ENCODE measurements at regions of chr19 and their contacts with region 1.

Region 1: DNA sequence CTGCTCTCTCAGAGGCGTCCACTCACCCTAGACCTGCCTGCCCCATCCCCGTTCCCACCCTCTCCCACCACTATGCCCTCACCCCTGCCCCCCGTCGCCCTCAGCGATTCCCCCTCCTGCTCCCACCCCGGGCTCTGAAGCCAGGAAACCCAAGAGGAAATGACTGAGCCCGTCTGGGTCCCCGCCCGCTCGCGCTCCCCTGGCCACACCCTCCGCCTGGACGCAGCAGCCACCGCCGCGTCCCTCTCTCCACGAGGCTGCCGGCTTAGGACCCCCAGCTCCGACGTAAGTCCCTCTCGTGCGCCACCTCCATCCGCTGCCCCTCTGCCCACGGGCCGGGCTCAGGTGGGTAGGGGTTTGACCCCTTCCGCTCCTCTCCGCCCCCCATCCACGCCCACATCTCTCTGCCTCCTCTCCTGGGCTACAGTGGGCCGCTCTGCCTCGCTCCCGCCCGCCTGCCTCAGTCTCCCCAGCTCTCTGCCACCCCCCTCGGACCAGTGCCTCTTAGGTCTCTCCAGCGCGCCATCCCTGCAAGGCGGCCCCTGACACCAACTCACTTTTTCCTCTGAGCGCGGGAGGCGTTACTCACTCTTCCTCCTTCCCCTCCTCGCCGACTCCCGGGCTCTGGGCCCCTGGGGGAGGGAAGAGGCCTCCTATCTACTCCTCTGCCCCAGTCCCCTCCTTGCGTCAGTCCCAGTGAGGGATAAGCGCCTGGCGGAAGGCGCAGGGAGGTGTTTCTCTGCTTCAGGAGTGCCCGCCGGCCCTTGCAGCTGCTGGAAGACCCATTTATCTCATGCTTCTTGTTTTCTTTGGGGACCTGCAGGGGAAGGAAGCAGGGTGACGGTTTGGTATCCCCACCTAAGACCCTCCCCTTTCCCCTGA is at the start of gene FXYD5:
- DNase-seq: peak; percentile 60 to 84 (median 64)
- H3K4me3 ChIP-seq: peak within 1 kb of the TSS; percentile 91 to 95
- H3K4me3 Mint-ChIP-seq: peak within 1 kb of the TSS; percentile 98 to 100 (median 99)
- H3K27ac ChIP-seq: peak within 1 kb of the TSS; percentile 91
- H3K27ac Mint-ChIP-seq: peak within 1 kb of the TSS; percentile 98 to 99 (median 99)
- H3K4me1 ChIP-seq: peaks cover 56% of the 10 kb centered on the region
- H3K4me1 Mint-ChIP-seq: peaks cover 35 to 68% (median 46%) of the 10 kb centered on the region in 4 donors
- H3K27me3 ChIP-seq: no peaks in the 10 kb centered on the region
- H3K27me3 Mint-ChIP-seq: no peaks in the 10 kb centered on the region
- total RNA-seq, gene FXYD5: 473 to 484 TPM

Region 2: DNA sequence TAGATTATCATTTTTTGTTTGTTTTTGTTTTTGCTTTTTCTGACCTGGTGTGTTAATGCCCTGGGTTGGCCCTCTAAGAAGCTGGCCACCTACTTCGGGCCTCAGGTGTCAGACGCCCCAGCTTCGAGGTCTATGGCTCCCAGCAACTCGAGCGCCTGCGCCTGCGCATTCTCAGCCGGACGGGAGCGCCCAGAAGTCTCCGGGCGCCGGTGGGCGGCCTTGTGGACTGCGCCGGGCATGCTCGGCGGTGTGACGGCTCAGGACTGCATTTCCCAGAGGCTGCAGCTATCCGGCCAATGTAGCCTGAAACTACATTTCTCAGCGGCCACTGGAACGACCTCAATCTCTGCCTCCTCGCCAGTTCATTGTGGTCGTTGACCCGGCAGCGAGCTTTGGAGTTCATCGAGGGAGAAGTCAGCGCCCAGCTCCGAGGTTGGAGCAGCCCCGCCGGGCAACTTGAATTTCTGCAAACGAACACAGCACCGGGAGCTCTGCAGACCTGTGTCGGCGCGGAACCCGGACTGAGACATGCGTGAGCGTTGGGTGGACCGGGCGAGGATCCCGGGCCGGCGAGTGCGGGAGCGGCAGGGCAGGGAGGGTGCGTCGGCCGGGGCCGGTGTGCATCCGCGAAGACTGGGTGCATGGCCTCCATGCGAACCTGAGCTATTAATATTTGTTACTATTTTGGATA is 227.9 kb before region 1 on chr19 and contains the start of gene ZNF30:
- CTCF ChIA-PET with region 1: no interaction called
- POLR2A ChIA-PET with region 1: no interaction called
- intact Hi-C with region 1: no loop called
- DNase-seq: peak; percentile 62 to 76 (median 69)
- H3K4me3 ChIP-seq: peak within 1 kb of the TSS; percentile 25 to 67
- H3K4me3 Mint-ChIP-seq: peak within 1 kb of the TSS; percentile 89 to 94 (median 92)
- H3K27ac ChIP-seq: peak within 1 kb of the TSS; percentile 31
- H3K27ac Mint-ChIP-seq: peak within 1 kb of the TSS in 6 of 7 donors; percentile 61 to 84 (median 78)
- H3K4me1 ChIP-seq: peaks cover 20% of the 10 kb centered on the region
- H3K4me1 Mint-ChIP-seq: peaks cover 13 to 24% (median 19%) of the 10 kb centered on the region in 4 donors
- H3K27me3 ChIP-seq: no peaks in the 10 kb centered on the region
- H3K27me3 Mint-ChIP-seq: no peaks in the 10 kb centered on the region
- total RNA-seq, gene ZNF30: 9.2 to 9.7 TPM

Region 3: GRCh38 chr19:35114353-35115176 is 40.2 kb before region 1 on chr19:
- CTCF ChIA-PET with region 1: interaction called, 3 read pairs
- POLR2A ChIA-PET with region 1: no interaction called
- intact Hi-C with region 1: loop called (anchors 5 kb)
- DNase-seq: peak; percentile 56 to 64 (median 58)
- H3K4me3 ChIP-seq: no peak overlapping the region
- H3K4me3 Mint-ChIP-seq: peak overlapping the region in 2 of 8 donors; percentile 25 to 36
- H3K27ac ChIP-seq: no peak overlapping the region
- H3K27ac Mint-ChIP-seq: peak overlapping the region in 4 of 7 donors; percentile 30 to 77 (median 60)
- H3K4me1 ChIP-seq: peaks cover 9% of the 10 kb centered on the region
- H3K4me1 Mint-ChIP-seq: peaks cover 4 to 7% (median 5%) of the 10 kb centered on the region in 4 donors
- H3K27me3 ChIP-seq: no peaks in the 10 kb centered on the region
- H3K27me3 Mint-ChIP-seq: peaks cover 5 to 11% of the 10 kb centered on the region in 2 donors

Region 4: DNA sequence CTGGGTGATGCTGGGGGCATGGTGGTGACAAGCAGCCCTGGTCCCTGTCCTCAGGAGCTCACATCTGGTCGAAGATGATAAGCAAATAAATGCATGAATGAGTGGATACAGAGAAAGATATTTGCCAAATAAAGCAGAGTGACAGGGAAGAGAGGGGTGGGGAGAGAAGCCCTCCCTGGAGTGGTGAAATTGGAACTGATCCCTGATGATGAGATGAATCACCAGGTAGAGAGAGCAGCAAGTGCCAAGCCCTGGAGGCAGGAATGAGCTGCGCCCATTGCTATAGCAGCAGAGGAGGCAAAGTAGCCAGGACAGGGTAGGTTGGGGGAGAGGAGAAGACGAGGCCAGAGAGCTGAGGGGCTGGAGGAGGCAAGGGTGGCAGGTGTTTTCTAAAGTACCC is 13.4 kb after region 1 on chr19:
- CTCF ChIA-PET with region 1: interaction called, 9 read pairs
- POLR2A ChIA-PET with region 1: interaction called, 140 read pairs
- intact Hi-C with region 1: loop called (anchors 1 kb)
- DNase-seq: no peak
- H3K4me3 ChIP-seq: no peak overlapping the region
- H3K4me3 Mint-ChIP-seq: peak overlapping the region in 4 of 8 donors; percentile 20 to 60 (median 48)
- H3K27ac ChIP-seq: peak overlapping the region; percentile 3
- H3K27ac Mint-ChIP-seq: peak overlapping the region; percentile 82 to 95 (median 91)
- H3K4me1 ChIP-seq: peaks cover 67% of the 10 kb centered on the region
- H3K4me1 Mint-ChIP-seq: peaks cover 31 to 80% (median 58%) of the 10 kb centered on the region in 4 donors
- H3K27me3 ChIP-seq: no peaks in the 10 kb centered on the region
- H3K27me3 Mint-ChIP-seq: no peaks in the 10 kb centered on the region

Region 5: GRCh38 chr19:35204799-35205732 is 50.3 kb after region 1 on chr19:
- CTCF ChIA-PET with region 1: interaction called, 10 read pairs
- POLR2A ChIA-PET with region 1: interaction called, 126 read pairs
- intact Hi-C with region 1: no loop called
- DNase-seq: no peak
- H3K4me3 ChIP-seq: no peak overlapping the region
- H3K4me3 Mint-ChIP-seq: peak overlapping the region in 7 of 8 donors; percentile 47 to 85 (median 63)
- H3K27ac ChIP-seq: peak overlapping the region; percentile 75
- H3K27ac Mint-ChIP-seq: peak overlapping the region; percentile 93 to 100 (median 99)
- H3K4me1 ChIP-seq: peaks cover 74% of the 10 kb centered on the region
- H3K4me1 Mint-ChIP-seq: peaks cover 53 to 92% (median 63%) of the 10 kb centered on the region in 4 donors
- H3K27me3 ChIP-seq: no peaks in the 10 kb centered on the region
- H3K27me3 Mint-ChIP-seq: no peaks in the 10 kb centered on the region

Region 6: DNA sequence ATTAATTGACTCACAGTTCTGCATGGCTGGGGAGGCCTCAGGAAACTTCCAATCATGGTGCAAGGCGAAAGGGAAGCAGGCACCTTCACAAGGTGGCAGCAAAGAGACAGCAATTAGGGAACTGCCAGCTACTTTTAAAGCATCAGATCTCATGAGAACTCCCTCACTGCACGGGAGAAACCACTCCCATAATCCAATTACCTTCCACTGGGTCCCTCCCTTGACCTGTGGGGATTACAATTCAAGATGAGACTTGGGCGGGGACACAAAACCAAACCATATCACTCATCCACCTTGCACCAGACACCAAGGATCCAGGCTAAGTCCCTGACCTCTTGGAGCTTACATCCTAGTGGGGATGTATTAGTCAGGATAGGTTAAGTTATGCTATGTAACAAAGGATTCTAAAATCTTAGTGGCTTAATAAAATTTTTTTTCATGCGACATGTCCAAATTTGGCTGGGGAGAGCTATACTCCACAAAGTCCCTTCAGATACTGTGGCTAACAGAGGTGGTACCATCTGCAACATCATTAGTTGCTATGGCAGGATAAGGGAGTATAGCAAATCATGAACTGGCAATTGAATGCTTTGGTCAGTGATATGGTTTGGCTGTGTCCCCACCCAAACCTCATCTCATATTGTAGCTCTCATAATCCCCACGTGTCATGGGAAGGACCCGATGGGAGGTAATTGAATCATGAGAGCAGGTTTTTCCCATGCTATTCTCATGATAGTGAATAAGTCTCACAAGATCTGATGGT is 82.1 kb after region 1 on chr19:
- CTCF ChIA-PET with region 1: interaction called, 18 read pairs
- POLR2A ChIA-PET with region 1: interaction called, 24 read pairs
- intact Hi-C with region 1: no loop called
- DNase-seq: peak in 3 of 5 donors; percentile 34 to 38 (median 36)
- H3K4me3 ChIP-seq: no peak overlapping the region
- H3K4me3 Mint-ChIP-seq: no peak overlapping the region
- H3K27ac ChIP-seq: no peak overlapping the region
- H3K27ac Mint-ChIP-seq: peak overlapping the region in 5 of 7 donors; percentile 30 to 93 (median 59)
- H3K4me1 ChIP-seq: peaks cover 34% of the 10 kb centered on the region
- H3K4me1 Mint-ChIP-seq: peaks cover 20 to 42% (median 37%) of the 10 kb centered on the region in 4 donors
- H3K27me3 ChIP-seq: no peaks in the 10 kb centered on the region
- H3K27me3 Mint-ChIP-seq: no peaks in the 10 kb centered on the region